ENCODE measurements at regions of chr6 and their contacts with region 1.

Region 1: GRCh38 chr6:36594029-36594815 is at the start of gene SRSF3:
- DNase-seq: peak; percentile 96 to 100 (median 98)
- ATAC-seq: peak; percentile 94
- H3K4me3 ChIP-seq: peak within 1 kb of the TSS; percentile 69
- H3K27ac ChIP-seq: peak within 1 kb of the TSS; percentile 94
- H3K4me1 ChIP-seq: peaks cover 23 to 25% of the 10 kb centered on the region in 2 experiments
- H3K27me3 ChIP-seq: no peaks in the 10 kb centered on the region
- CTCF ChIP-seq: peak; percentile 61 to 64 (median 62)
- EP300 ChIP-seq: peak; percentile 43
- POLR2A ChIP-seq: peak; percentile 100
- RAD21 ChIP-seq: peak; percentile 1 to 26; a peak in 2 of 4 replicates
- polyA plus RNA-seq, gene SRSF3: 955 to 1,200 TPM

Region 2: GRCh38 chr6:36423101-36423824 is 171.0 kb before region 1 on chr6:
- CTCF ChIA-PET with region 1: interaction called, 3 read pairs
- POLR2A ChIA-PET with region 1: interaction called, 22 read pairs
- in situ Hi-C with region 1: no loop called
- intact Hi-C with region 1: loop called (anchors 1 kb)
- DNase-seq: peak; percentile 99 to 100 (median 100)
- ATAC-seq: peak; percentile 96
- H3K4me3 ChIP-seq: peak overlapping the region; percentile 32
- H3K27ac ChIP-seq: peak overlapping the region; percentile 75
- H3K4me1 ChIP-seq: peaks cover 13 to 15% of the 10 kb centered on the region in 2 experiments; a peak in 4 of 5 replicates
- H3K27me3 ChIP-seq: no peaks in the 10 kb centered on the region
- CTCF ChIP-seq: peak; percentile 90 to 95 (median 94)
- EP300 ChIP-seq: peak; percentile 49
- POLR2A ChIP-seq: peak; percentile 90
- RAD21 ChIP-seq: peak; percentile 96 to 98

Region 3: GRCh38 chr6:36442671-36443470 is 151.4 kb before region 1 on chr6 and contains the starts of genes KCTD20 and PXT1:
- CTCF ChIA-PET with region 1: no interaction called
- POLR2A ChIA-PET with region 1: interaction called, 7 read pairs
- in situ Hi-C with region 1: no loop called
- intact Hi-C with region 1: loop called (anchors 5 kb)
- DNase-seq: peak; percentile 96 to 98 (median 97)
- ATAC-seq: peak; percentile 85
- H3K4me3 ChIP-seq: peak within 1 kb of the TSS; percentile 91
- H3K27ac ChIP-seq: peak within 1 kb of the TSS; percentile 89
- H3K4me1 ChIP-seq: peaks cover 20 to 31% of the 10 kb centered on the region in 2 experiments
- H3K27me3 ChIP-seq: no peaks in the 10 kb centered on the region
- CTCF ChIP-seq: no peak; a peak in 2 of 6 replicates
- EP300 ChIP-seq: peak; percentile 75
- POLR2A ChIP-seq: peak; percentile 96
- RAD21 ChIP-seq: peak; percentile 18 to 45; a peak in 3 of 4 replicates
- polyA plus RNA-seq, gene KCTD20: 28.9 to 30.0 TPM
- polyA plus RNA-seq, gene PXT1: not detected

Region 4: DNA sequence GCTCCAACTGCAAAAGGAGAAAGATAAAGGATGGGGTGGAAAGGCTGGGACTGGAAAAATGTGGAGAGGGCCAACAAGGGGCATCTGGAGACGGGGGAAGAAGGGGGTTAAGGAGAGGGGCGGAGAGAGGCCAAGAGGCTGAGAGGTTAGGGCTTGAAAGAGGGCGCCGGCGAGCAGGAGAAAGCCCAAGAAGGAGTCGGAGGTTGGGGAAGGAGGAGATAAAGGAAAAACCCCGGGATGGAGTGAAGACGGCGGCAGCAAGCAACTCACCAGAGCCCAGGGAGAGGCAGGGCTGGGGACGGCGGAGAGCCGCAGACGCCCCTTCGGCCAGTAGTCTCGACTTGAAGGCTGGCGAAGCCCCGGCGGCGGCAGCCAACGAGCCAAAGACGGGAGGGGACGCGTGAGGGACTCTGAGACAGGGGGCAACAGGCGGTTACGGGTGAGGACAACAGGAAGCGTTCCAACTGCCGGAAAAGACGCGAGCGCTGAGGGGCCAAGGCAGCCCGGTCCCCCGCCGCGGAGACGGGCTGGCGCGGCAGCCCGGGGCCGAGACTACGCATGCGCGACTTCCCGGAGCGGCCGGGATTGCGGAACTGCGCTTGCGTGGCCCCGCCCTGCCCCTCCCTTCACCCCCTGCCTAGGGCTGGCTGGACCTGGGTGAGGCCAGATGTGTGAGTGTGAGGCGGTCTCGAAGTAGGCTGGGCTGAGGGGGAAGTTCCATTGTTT is 47.1 kb before region 1 on chr6 and contains the start of gene STK38:
- CTCF ChIA-PET with region 1: no interaction called
- POLR2A ChIA-PET with region 1: interaction called, 24 read pairs
- in situ Hi-C with region 1: no loop called
- intact Hi-C with region 1: loop called (anchors 2 kb)
- DNase-seq: peak; percentile 96 to 100 (median 100)
- ATAC-seq: peak; percentile 93
- H3K4me3 ChIP-seq: peak within 1 kb of the TSS; percentile 92
- H3K27ac ChIP-seq: peak within 1 kb of the TSS; percentile 90
- H3K4me1 ChIP-seq: peaks cover 23 to 24% of the 10 kb centered on the region in 2 experiments
- H3K27me3 ChIP-seq: no peaks in the 10 kb centered on the region
- CTCF ChIP-seq: peak; percentile 4 to 36 (median 14); a peak in 2 of 6 replicates
- EP300 ChIP-seq: 0 out of 2 replicates have a peak, but pooled peaks have one; percentile 18
- POLR2A ChIP-seq: peak; percentile 97
- RAD21 ChIP-seq: peak; percentile 1 to 16; a peak in 1 of 4 replicates
- polyA plus RNA-seq, gene STK38: 5.7 to 8.8 TPM

Region 5: GRCh38 chr6:36563237-36563927 is 30.8 kb before region 1 on chr6:
- CTCF ChIA-PET with region 1: no interaction called
- POLR2A ChIA-PET with region 1: interaction called, 13 read pairs
- in situ Hi-C with region 1: no loop called
- intact Hi-C with region 1: no loop called
- DNase-seq: no peak
- ATAC-seq: peak; percentile 63
- H3K4me3 ChIP-seq: no peak overlapping the region
- H3K27ac ChIP-seq: no peak overlapping the region
- H3K4me1 ChIP-seq: no peaks in the 10 kb centered on the region; a peak in 2 of 5 replicates
- H3K27me3 ChIP-seq: no peaks in the 10 kb centered on the region
- CTCF ChIP-seq: no peak
- EP300 ChIP-seq: no peak
- POLR2A ChIP-seq: no peak
- RAD21 ChIP-seq: no peak

Region 6: GRCh38 chr6:36576561-36576960 is 17.7 kb before region 1 on chr6:
- CTCF ChIA-PET with region 1: no interaction called
- POLR2A ChIA-PET with region 1: interaction called, 88 read pairs
- in situ Hi-C with region 1: no loop called
- intact Hi-C with region 1: no loop called
- DNase-seq: no peak
- ATAC-seq: no peak
- H3K4me3 ChIP-seq: no peak overlapping the region
- H3K27ac ChIP-seq: no peak overlapping the region
- H3K4me1 ChIP-seq: peaks cover 16 to 21% of the 10 kb centered on the region in 2 experiments; a peak in 3 of 5 replicates
- H3K27me3 ChIP-seq: no peaks in the 10 kb centered on the region
- CTCF ChIP-seq: no peak
- EP300 ChIP-seq: no peak
- POLR2A ChIP-seq: no peak
- RAD21 ChIP-seq: no peak

Region 7: GRCh38 chr6:36605560-36606391 is 11.6 kb after region 1 on chr6:
- CTCF ChIA-PET with region 1: no interaction called
- POLR2A ChIA-PET with region 1: interaction called, 239 read pairs
- in situ Hi-C with region 1: no loop called
- intact Hi-C with region 1: no loop called
- DNase-seq: no peak
- ATAC-seq: peak; percentile 21
- H3K4me3 ChIP-seq: no peak overlapping the region
- H3K27ac ChIP-seq: peak overlapping the region; percentile 3; the same call in 1 of the 3 replicates
- H3K4me1 ChIP-seq: no peaks in the 10 kb centered on the region; a peak in 1 of 5 replicates
- H3K27me3 ChIP-seq: no peaks in the 10 kb centered on the region
- CTCF ChIP-seq: no peak
- EP300 ChIP-seq: no peak
- POLR2A ChIP-seq: peak; percentile 42
- RAD21 ChIP-seq: no peak

Measured in K562 (cell line).